ENCODE measurements at regions of chr11 and their contacts with region 1.

Region 1: GRCh38 chr11:115334932-115335788 is 169.1 kb downstream of the CADM1 start:
- DNase-seq: no peak
- ATAC-seq: no peak
- H3K4me3 Mint-ChIP-seq: no peak overlapping the region
- H3K27ac Mint-ChIP-seq: no peak overlapping the region
- H3K4me1 Mint-ChIP-seq: no peaks in the 10 kb centered on the region
- H3K27me3 Mint-ChIP-seq: peaks cover 4% of the 10 kb centered on the region

Region 2: GRCh38 chr11:115324581-115325432 is 10.4 kb before region 1 on chr11:
- CTCF ChIA-PET with region 1: interaction called, 17 read pairs
- DNase-seq: peak; percentile 47
- ATAC-seq: peak; percentile 84
- H3K4me3 Mint-ChIP-seq: no peak overlapping the region
- H3K27ac Mint-ChIP-seq: no peak overlapping the region
- H3K4me1 Mint-ChIP-seq: peaks cover 3% of the 10 kb centered on the region
- H3K27me3 Mint-ChIP-seq: peaks cover 15% of the 10 kb centered on the region